ENCODE measurements at regions of chr19 and their contacts with region 1.

Region 1: GRCh38 chr19:42283143-42284065 is 14.4 kb downstream of the CIC start:
- DNase-seq: peak; percentile 91
- ATAC-seq: peak; percentile 64
- H3K4me3 Mint-ChIP-seq: no peak overlapping the region
- H3K27ac Mint-ChIP-seq: no peak overlapping the region
- H3K4me1 Mint-ChIP-seq: peaks cover 55% of the 10 kb centered on the region
- H3K27me3 Mint-ChIP-seq: no peaks in the 10 kb centered on the region
- CTCF ChIP-seq: no peak

Region 2: GRCh38 chr19:42113641-42114348 is 169.6 kb before region 1 on chr19:
- CTCF ChIA-PET with region 1: interaction called, 10 read pairs
- POLR2A ChIA-PET with region 1: interaction called, 20 read pairs
- intact Hi-C with region 1: loop called (anchors 1 kb)
- DNase-seq: peak; percentile 68
- ATAC-seq: peak; percentile 77
- H3K4me3 Mint-ChIP-seq: peak overlapping the region; percentile 83
- H3K27ac Mint-ChIP-seq: peak overlapping the region; percentile 96
- H3K4me1 Mint-ChIP-seq: peaks cover 95% of the 10 kb centered on the region
- H3K27me3 Mint-ChIP-seq: no peaks in the 10 kb centered on the region
- CTCF ChIP-seq: no peak

Region 3: DNA sequence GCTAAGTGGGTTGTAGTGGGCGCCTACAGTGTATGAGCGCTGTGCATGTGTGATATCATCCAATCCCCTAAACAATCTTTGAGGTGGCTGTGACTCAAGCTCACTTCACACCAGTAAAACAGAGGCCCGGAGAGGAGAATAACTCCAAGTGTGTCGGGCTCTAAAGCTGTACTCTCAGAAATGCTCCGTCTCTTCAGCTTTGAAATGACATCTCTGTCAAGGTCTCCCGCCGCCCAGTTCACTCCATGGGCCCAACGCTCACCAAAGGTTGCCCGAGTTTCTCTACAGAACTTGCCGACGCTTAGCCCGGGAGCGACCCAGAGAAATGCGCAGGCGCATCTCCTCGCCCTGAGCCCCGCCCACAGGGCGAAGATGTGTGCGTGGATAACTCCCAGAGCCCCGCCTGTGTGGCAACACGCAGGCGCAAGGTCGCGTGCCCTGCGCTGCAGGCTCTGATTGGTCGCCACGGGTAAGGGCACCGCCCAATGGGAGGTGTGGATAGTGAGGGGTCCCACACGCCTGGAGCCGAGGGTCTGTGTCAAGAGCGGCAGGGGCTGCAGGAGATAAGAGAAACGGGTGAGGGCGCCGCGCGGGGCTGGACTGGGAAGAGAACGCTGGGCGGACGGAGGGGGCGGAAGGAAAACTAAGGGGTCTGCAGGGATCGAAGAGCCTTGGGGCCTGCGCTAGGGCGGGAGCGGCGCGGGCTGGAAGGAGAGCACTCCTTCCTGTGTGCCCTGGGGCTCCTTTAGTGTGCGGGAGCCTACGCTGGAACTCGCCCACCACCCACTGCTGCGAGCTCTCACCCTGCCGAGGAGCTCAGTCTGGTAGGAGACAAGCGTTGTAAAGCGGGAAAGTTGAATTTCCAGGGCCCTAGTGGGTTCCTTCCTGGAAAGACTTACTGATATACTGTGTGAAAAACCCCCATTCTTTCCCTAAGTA is 63.3 kb before region 1 on chr19 and contains the start of gene ZNF526:
- CTCF ChIA-PET with region 1: interaction called, 4 read pairs
- POLR2A ChIA-PET with region 1: interaction called, 5 read pairs
- intact Hi-C with region 1: loop called (anchors 1 kb)
- DNase-seq: peak; percentile 93
- ATAC-seq: peak; percentile 83
- H3K4me3 Mint-ChIP-seq: peak within 1 kb of the TSS; percentile 99
- H3K27ac Mint-ChIP-seq: peak within 1 kb of the TSS; percentile 93
- H3K4me1 Mint-ChIP-seq: peaks cover 55% of the 10 kb centered on the region
- H3K27me3 Mint-ChIP-seq: no peaks in the 10 kb centered on the region
- CTCF ChIP-seq: no peak
- total RNA-seq, gene ZNF526: 19.6 and 22.7 TPM in 2 replicates

Region 4: DNA sequence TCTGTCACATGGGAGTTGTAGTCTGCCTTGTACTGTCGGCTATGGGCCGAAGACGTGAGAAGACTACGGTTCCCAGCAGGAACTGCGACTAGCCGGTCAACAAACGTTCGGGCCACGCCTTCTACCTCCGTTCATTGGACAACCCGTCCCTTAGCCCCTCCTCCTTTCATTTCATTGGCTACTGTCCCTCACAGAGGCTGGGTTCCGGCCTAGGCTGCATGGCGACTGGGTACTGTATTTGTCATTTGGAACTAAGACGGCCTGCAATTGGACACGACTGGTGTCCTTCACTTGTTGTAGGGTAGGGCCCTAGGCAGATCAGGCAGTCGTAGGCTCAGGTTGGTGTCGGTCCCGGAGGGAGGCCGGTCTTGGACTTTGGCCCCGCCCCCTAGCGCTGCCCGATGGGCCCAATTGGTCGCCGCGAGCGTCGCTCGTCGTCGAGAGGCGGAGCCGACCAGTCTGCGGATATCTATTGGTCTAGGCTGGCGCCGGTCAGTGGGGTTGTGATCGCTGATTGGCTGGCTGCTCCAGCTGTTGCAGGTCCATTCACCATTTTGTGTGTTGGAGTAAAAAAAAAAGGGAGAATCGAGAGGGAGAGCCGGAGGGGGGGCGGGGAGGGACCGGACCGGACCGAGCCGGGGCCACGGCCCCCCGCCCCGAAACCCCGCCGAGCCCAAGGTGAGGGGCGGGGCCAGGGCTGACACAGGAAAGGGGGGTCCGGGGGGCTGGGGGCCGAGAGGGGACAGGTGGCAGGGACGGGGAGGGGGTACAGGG is 14.5 kb before region 1 on chr19 and contains the start of gene CIC:
- CTCF ChIA-PET with region 1: interaction called, 22 read pairs
- POLR2A ChIA-PET with region 1: interaction called, 55 read pairs
- intact Hi-C with region 1: loop called (anchors 1 kb)
- DNase-seq: peak; percentile 95
- ATAC-seq: peak; percentile 81
- H3K4me3 Mint-ChIP-seq: peak within 1 kb of the TSS; percentile 88
- H3K27ac Mint-ChIP-seq: peak within 1 kb of the TSS; percentile 94
- H3K4me1 Mint-ChIP-seq: peaks cover 31% of the 10 kb centered on the region
- H3K27me3 Mint-ChIP-seq: no peaks in the 10 kb centered on the region
- CTCF ChIP-seq: no peak
- total RNA-seq, gene CIC: 85.4 and 96.5 TPM in 2 replicates

Region 5: GRCh38 chr19:42301656-42302203 is 18.3 kb after region 1 on chr19 and contains the start of gene PRR19:
- CTCF ChIA-PET with region 1: interaction called, 9 read pairs
- POLR2A ChIA-PET with region 1: interaction called, 9 read pairs
- intact Hi-C with region 1: loop called (anchors 1 kb)
- DNase-seq: no peak
- ATAC-seq: no peak
- H3K4me3 Mint-ChIP-seq: peak within 1 kb of the TSS; percentile 84
- H3K27ac Mint-ChIP-seq: peak within 1 kb of the TSS; percentile 81
- H3K4me1 Mint-ChIP-seq: peaks cover 25% of the 10 kb centered on the region
- H3K27me3 Mint-ChIP-seq: no peaks in the 10 kb centered on the region
- CTCF ChIP-seq: no peak
- total RNA-seq, gene PRR19: 0.20 and 0.33 TPM in 2 replicates

Measured in activated B cell treated with CpG ODN at 0.5 μM for 24 hours (primary cell).